SK-N-SH (cell line): ENCODE measurements at regions of chr6 and their contacts with region 1.

Region 1: GRCh38 chr6:26156076-26156849 is 69.0 kb downstream of the HFE start:
- DNase-seq: peak; percentile 88
- H3K4me3 ChIP-seq: peak overlapping the region; percentile 82 to 90
- H3K27ac ChIP-seq: peak overlapping the region; percentile 88 to 97
- H3K4me1 ChIP-seq: no peaks in the 10 kb centered on the region; a peak in 3 of 4 replicates
- H3K27me3 ChIP-seq: no peaks in the 10 kb centered on the region
- CTCF ChIP-seq: no peak
- EP300 ChIP-seq: peak in 1 of 2 experiments; percentile 60; a peak in 1 of 4 replicates
- RAD21 ChIP-seq: no peak

Region 2: DNA sequence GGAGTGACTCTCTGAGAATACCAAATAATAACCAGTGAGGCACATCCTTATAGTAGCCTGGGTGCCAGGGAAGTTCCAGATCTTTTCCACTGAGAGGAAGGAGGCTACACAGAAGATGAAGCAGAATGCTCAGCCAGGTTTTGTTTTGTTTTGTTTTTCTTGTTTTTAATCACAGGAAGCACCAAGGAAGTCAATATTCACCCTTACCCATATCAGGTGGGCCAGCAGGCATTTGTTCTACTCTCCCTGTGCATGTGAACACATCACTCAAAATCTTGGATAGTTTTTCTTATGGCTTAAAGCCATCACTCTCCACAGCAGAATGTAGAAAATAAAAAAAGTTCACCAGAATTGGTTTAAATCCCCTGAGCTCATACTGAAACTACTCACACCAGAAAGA is 334.9 kb before region 1 on chr6:
- CTCF ChIA-PET with region 1: no interaction called
- POLR2A ChIA-PET with region 1: no interaction called
- DNase-seq: no peak
- H3K4me3 ChIP-seq: no peak overlapping the region
- H3K27ac ChIP-seq: no peak overlapping the region
- H3K4me1 ChIP-seq: no peaks in the 10 kb centered on the region
- H3K27me3 ChIP-seq: no peaks in the 10 kb centered on the region
- CTCF ChIP-seq: no peak
- EP300 ChIP-seq: no peak
- RAD21 ChIP-seq: no peak

Region 3: GRCh38 chr6:26031595-26032339 is 124.5 kb before region 1 on chr6:
- CTCF ChIA-PET with region 1: no interaction called
- POLR2A ChIA-PET with region 1: interaction called, 16 read pairs
- DNase-seq: peak; percentile 89
- H3K4me3 ChIP-seq: peak overlapping the region; percentile 73 to 84
- H3K27ac ChIP-seq: peak overlapping the region; percentile 92 to 99
- H3K4me1 ChIP-seq: peaks cover 10 to 23% of the 10 kb centered on the region in 2 experiments; a peak in 3 of 4 replicates
- H3K27me3 ChIP-seq: no peaks in the 10 kb centered on the region
- CTCF ChIP-seq: peak; percentile 30
- EP300 ChIP-seq: peak; percentile 52 to 61; a peak in 2 of 4 replicates
- RAD21 ChIP-seq: no peak

Region 4: GRCh38 chr6:26129656-26130055 is 26.6 kb before region 1 on chr6:
- CTCF ChIA-PET with region 1: no interaction called
- POLR2A ChIA-PET with region 1: interaction called, 623 read pairs
- DNase-seq: no peak
- H3K4me3 ChIP-seq: no peak overlapping the region
- H3K27ac ChIP-seq: no peak overlapping the region
- H3K4me1 ChIP-seq: peaks cover 7 to 8% of the 10 kb centered on the region in 2 experiments; a peak in 3 of 4 replicates
- H3K27me3 ChIP-seq: no peaks in the 10 kb centered on the region
- CTCF ChIP-seq: no peak
- EP300 ChIP-seq: no peak
- RAD21 ChIP-seq: no peak

Region 5: DNA sequence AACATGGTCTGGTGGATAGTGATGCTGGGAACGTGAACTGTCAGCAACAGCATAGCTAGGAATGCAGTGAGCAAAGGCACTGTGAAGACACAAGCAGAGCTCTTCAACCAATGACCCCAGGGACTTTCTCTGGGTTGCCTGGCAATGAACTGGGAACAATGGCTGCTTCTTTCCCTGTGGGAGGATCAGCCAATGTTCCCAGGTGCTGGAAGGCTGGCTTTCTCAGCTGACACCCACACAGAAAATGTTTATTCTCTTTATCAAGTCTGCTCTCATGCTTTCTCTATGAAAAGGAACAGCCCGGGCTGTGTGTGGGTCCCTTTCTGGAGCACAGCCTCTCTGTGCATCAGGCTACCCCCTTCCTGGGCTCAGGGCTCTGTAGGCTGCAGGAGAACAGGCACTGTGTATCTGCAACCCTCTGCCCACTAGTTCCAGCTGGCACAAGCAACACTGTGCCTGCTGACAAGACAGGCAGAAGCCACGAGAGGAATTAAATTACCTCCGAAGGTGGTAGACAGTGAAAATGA is 14.8 kb before region 1 on chr6:
- CTCF ChIA-PET with region 1: interaction called, 8 read pairs
- POLR2A ChIA-PET with region 1: interaction called, 22 read pairs
- DNase-seq: no peak
- H3K4me3 ChIP-seq: no peak overlapping the region
- H3K27ac ChIP-seq: peak overlapping the region in 1 of 2 experiments; percentile 44; a peak in 1 of 4 replicates
- H3K4me1 ChIP-seq: peaks cover 0 to 13% of the 10 kb centered on the region in 2 experiments; a peak in 2 of 4 replicates
- H3K27me3 ChIP-seq: no peaks in the 10 kb centered on the region
- CTCF ChIP-seq: no peak
- EP300 ChIP-seq: no peak
- RAD21 ChIP-seq: no peak

Region 6: GRCh38 chr6:26183581-26184366 is 27.5 kb after region 1 on chr6:
- CTCF ChIA-PET with region 1: interaction called, 11 read pairs
- POLR2A ChIA-PET with region 1: interaction called, 144 read pairs
- DNase-seq: peak; percentile 71
- H3K4me3 ChIP-seq: peak overlapping the region; percentile 49 to 56
- H3K27ac ChIP-seq: peak overlapping the region; percentile 62 to 97
- H3K4me1 ChIP-seq: peaks cover 4 to 6% of the 10 kb centered on the region in 2 experiments; a peak in 2 of 4 replicates
- H3K27me3 ChIP-seq: no peaks in the 10 kb centered on the region
- CTCF ChIP-seq: no peak
- EP300 ChIP-seq: peak in 1 of 2 experiments; percentile 39; a peak in 1 of 4 replicates
- RAD21 ChIP-seq: no peak